ENCODE measurements at regions of chr4 and their contacts with region 1.

Region 1: DNA sequence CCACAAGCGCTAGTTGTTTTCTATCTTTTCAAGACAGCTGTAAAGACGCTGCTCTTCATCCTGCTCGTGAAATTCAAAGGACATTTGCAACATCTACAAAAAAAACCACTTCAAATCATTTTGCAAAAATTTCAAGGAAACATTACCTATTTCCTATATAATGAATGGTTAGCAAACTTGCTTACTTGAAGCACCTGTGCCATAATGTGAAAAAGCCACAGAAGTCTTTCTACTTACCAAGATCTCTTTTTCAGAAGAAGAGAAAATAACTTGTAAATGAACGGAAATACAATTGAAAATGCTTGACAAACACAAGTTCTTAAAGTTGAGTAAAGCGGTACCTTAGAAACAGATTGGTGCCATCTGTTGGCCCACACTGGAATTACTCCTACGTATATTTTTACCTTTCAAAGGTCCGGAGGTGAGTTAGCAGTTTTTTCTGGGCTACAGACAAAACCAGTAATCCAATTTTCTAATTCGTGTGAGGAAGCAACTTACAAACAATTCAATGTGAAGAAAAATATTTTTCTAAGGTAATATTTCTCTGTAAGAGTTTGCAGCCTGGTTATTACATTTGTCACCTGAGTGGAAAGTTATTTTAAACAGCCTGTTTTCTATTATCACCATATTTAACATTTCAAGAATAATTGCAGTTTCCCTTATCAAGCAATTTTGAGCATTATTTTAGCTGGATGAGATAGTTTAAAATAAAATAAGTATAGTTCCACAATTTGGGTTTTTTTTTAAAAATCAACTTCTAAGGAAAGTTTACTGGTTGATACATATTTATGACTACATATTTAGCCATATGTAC is at the start of gene TLR6:
- DNase-seq: no peak
- ATAC-seq: peak; percentile 81
- H3K4me3 ChIP-seq: peak within 1 kb of the TSS in 1 of 2 donors; percentile 9
- H3K27ac ChIP-seq: peak within 1 kb of the TSS in 1 of 2 donors; percentile 40
- H3K4me1 ChIP-seq: no peaks in the 10 kb centered on the region
- H3K27me3 ChIP-seq: no peaks in the 10 kb centered on the region
- total RNA-seq, gene TLR6: 5.8 to 12.8 TPM

Region 2: GRCh38 chr4:38717604-38718003 is 139.1 kb before region 1 on chr4:
- intact Hi-C with region 1: no loop called
- DNase-seq: no peak
- ATAC-seq: no peak
- H3K4me3 ChIP-seq: no peak overlapping the region
- H3K27ac ChIP-seq: no peak overlapping the region
- H3K4me1 ChIP-seq: no peaks in the 10 kb centered on the region
- H3K27me3 ChIP-seq: no peaks in the 10 kb centered on the region

Region 3: DNA sequence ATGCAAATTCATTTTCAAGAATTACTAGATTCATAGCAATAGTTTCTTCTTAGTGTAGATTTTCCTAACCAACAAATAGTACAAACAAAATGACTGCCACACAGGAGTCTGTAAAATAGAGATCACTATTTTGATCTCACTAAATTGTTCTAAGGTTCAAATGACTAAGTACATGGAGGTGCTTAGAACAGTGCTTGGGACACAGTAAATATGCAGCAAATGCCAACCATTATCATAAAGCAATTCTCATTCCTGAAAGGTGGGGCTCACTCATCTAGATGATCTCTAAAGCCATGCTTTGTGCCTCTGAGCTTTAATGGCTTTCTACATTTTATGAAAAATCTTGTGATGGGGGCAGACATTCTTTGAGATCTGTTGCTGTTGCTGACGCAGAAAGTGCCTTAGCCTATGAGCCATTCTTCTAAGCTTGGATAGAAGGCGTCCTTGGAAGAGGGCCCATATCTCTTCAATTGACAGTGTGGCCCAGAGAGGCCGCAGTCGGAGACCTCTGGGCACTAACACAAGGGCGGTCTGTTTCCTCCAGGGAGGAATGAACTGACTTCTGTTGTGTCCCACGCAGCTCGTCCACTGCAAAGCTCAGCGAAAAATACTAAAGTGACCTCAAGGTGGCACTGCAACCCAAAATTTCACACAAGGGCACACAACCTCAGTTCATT is 97.5 kb before region 1 on chr4:
- intact Hi-C with region 1: loop called in 1 of 2 experiments (anchors 5 kb)
- DNase-seq: peak in 1 of 2 donors; percentile 63
- ATAC-seq: peak; percentile 79
- H3K4me3 ChIP-seq: no peak overlapping the region
- H3K27ac ChIP-seq: no peak overlapping the region
- H3K4me1 ChIP-seq: no peaks in the 10 kb centered on the region
- H3K27me3 ChIP-seq: no peaks in the 10 kb centered on the region

Measured in aorta (tissue), 5 donors.